Natural killer cell (primary cell): ENCODE measurements at regions of chr16 and their contacts with region 1.

Region 1: DNA sequence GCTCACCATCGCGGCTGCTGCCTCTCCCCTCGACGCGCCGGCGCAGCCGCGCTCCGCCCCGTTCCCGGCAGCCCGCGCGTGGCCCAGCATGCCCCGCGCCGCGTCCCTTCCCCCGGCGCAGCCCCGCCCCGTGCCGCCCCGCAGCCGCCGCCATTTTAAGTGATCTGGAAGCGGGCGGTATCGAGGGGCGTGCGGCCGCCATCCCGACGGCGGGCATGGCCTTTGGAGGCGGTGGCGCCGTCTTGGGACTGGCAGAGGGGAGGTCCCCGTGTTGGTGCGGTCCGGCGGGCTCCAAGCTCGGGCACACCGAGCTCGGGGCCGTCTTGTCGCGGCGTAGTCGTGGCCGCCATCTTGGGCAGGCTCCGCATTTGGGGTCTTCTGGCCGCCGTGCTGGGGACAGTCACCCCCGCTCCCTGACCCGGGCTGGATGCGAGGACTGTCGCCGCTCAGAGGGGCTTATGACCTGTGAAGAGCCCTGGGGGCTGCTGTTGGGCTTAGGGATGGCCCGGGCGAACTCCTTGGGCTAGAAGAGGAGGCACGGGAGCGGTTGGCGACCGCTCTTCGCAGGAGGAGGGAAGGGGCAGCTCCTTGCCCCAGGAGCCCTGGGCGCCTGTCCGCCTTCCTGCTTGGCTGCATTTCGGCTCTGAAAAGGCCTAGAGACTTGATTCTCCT is at the start of gene ELOB:
- DNase-seq: peak; percentile 88 to 94
- ATAC-seq: peak; percentile 87 to 97 (median 88)
- H3K4me3 ChIP-seq: peak within 1 kb of the TSS; percentile 95
- H3K4me3 Mint-ChIP-seq: peak within 1 kb of the TSS; percentile 90
- H3K27ac ChIP-seq: peak within 1 kb of the TSS; percentile 95
- H3K27ac Mint-ChIP-seq: peak within 1 kb of the TSS; percentile 93 to 95
- H3K4me1 ChIP-seq: peaks cover 49% of the 10 kb centered on the region
- H3K4me1 Mint-ChIP-seq: peaks cover 25 to 32% of the 10 kb centered on the region in 2 donors
- H3K27me3 ChIP-seq: no peaks in the 10 kb centered on the region
- H3K27me3 Mint-ChIP-seq: no peaks in the 10 kb centered on the region
- CTCF ChIP-seq: no peak
- total RNA-seq, gene ELOB: 146 to 207 (median 161) TPM

Region 2: GRCh38 chr16:2752035-2752849 is 25.1 kb before region 1 on chr16 and contains the start of gene SRRM2:
- intact Hi-C with region 1: loop called (anchors 2 kb)
- DNase-seq: peak; percentile 95 to 97
- ATAC-seq: peak; percentile 83 to 92 (median 87)
- H3K4me3 ChIP-seq: peak within 1 kb of the TSS; percentile 88
- H3K4me3 Mint-ChIP-seq: peak within 1 kb of the TSS; percentile 95
- H3K27ac ChIP-seq: peak within 1 kb of the TSS; percentile 97
- H3K27ac Mint-ChIP-seq: peak within 1 kb of the TSS; percentile 97
- H3K4me1 ChIP-seq: peaks cover 49% of the 10 kb centered on the region
- H3K4me1 Mint-ChIP-seq: peaks cover 48 to 56% of the 10 kb centered on the region in 2 donors
- H3K27me3 ChIP-seq: no peaks in the 10 kb centered on the region
- H3K27me3 Mint-ChIP-seq: no peaks in the 10 kb centered on the region
- CTCF ChIP-seq: no peak
- total RNA-seq, gene SRRM2: 1,131 to 1,162 (median 1,149) TPM

Region 3: GRCh38 chr16:2799866-2800239 is 22.5 kb after region 1 on chr16:
- intact Hi-C with region 1: loop called (anchors 2 kb)
- DNase-seq: no peak
- ATAC-seq: no peak
- H3K4me3 ChIP-seq: no peak overlapping the region
- H3K4me3 Mint-ChIP-seq: no peak overlapping the region
- H3K27ac ChIP-seq: no peak overlapping the region
- H3K27ac Mint-ChIP-seq: no peak overlapping the region
- H3K4me1 ChIP-seq: no peaks in the 10 kb centered on the region
- H3K4me1 Mint-ChIP-seq: no peaks in the 10 kb centered on the region
- H3K27me3 ChIP-seq: no peaks in the 10 kb centered on the region
- H3K27me3 Mint-ChIP-seq: peaks cover 0 to 2% of the 10 kb centered on the region in 2 donors
- CTCF ChIP-seq: no peak

Region 4: DNA sequence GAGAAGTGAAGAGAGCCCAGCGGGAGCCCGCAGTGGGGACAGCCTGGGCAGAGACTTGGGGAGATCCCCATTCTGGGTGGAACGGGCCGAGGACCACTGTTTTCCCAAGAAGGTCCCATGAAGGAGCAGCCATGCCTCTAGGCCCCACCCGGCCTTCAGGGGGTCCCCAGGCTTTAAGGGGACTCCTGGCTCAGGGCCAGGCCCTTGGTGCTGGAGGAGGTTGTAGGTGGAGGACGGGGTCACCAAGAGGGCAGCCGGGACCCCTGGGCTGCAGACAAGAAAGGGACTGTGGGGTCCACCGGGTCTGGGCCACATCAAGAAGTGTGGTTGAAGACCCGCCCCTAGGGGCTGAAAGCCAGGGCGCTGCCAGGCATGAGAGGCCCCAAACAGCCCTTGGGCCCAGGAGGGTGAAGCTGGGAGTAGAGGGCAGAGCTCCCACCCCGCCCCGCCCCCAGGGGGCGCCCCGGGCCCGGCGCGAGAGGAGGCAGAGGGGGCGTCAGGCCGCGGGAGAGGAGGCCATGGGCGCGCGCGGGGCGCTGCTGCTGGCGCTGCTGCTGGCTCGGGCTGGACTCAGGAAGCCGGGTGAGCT is 39.5 kb after region 1 on chr16 and contains the start of gene PRSS21:
- intact Hi-C with region 1: no loop called
- DNase-seq: peak in 1 of 2 donors; percentile 44
- ATAC-seq: peak in 2 of 3 donors; percentile 58 to 84
- H3K4me3 ChIP-seq: no peak within 1 kb of the TSS
- H3K4me3 Mint-ChIP-seq: peak within 1 kb of the TSS; percentile 57
- H3K27ac ChIP-seq: no peak within 1 kb of the TSS
- H3K27ac Mint-ChIP-seq: no peak within 1 kb of the TSS
- H3K4me1 ChIP-seq: peaks cover 9% of the 10 kb centered on the region
- H3K4me1 Mint-ChIP-seq: no peaks in the 10 kb centered on the region
- H3K27me3 ChIP-seq: no peaks in the 10 kb centered on the region
- H3K27me3 Mint-ChIP-seq: no peaks in the 10 kb centered on the region
- CTCF ChIP-seq: no peak
- total RNA-seq, gene PRSS21: 0.64 to 6.6 TPM in 2 of 3 donors, not detected in the other